A673 (cell line): ENCODE measurements at regions of chr5 and their contacts with region 1.

Region 1: DNA sequence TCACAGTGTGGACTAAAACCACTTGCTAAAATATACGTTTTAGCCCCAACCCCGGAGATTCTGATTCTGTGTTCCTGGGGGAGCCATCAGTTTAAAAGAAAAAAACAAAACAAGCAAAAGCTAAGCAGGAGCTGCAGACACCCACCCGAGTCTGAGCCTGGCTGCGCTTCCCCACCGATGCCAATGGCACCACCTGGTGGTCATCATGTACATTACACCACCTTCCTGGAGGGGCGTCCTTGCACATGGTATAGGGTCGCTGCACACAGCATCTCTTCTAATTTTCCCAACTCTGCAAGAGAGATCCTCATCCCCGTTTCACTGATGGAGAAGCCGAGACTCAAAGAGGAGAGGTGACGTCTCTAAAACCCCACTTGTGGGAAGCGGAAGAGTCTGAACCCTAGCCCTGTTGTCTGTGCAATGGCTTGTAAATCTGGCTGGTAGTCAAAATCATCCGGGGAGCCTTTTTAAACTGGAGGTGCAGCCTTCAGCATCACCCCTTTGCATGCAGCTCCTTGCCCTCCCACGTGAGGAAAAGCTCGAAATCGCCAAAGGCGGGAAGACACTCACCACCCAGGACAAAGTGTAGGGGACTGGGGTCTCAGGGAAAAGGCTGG is 23.1 kb upstream of the CNOT6 start:
- DNase-seq: peak; percentile 65
- H3K4me3 ChIP-seq: no peak overlapping the region
- H3K27ac ChIP-seq: no peak overlapping the region
- H3K4me1 ChIP-seq: no peaks in the 10 kb centered on the region
- H3K27me3 ChIP-seq: no peaks in the 10 kb centered on the region
- CTCF ChIP-seq: peak; percentile 83

Region 2: DNA sequence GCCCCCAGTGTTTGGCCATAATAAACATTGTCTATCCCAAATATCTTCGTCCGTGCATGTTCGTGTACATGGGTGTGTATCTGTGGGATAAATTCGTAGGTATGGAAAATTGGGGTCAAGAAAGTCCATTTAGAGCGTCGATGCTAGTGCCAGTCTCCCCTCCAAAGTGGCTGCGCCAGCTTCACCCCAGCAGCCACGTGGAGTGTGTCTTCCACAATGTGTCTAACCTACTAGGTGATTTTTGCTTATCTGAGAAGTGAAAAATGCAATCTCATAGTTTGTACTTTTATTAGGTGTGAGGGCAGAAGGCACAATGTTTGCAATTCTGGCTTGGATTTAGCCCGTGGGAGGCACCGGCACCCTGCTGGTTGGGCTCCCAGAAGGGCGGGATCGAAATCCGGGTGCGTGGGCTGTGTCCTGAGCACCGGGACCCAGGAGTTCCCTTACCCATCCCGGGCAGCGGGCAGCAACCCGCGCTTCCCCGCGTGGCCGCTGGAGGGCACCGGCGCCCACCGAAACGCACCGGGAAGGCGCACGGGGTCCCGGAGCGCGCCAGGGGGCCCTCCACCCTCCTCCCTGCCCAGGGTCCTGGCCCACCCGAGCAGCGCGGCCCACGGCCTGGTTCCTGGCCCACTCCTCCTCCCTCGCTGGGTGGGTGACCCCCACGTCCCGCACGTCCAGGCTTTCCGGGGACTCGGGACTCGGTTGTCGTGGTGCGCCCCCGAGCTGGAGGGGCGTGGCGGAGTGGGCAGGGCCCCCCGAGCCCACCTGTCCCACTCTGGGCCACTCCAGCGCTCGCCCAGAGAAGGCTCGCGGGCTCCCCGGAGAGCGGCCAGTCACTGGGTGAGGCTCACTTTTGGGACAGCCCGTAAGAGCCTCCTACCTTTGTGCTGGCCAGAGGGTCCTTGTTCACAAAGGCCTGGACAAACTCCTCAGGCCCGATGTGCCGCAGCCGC is 344.1 kb before region 1 on chr5:
- CTCF ChIA-PET with region 1: interaction called, 3 read pairs
- POLR2A ChIA-PET with region 1: no interaction called
- intact Hi-C with region 1: loop called (anchors 1 kb)
- DNase-seq: peak; percentile 10
- H3K4me3 ChIP-seq: peak overlapping the region; percentile 40
- H3K27ac ChIP-seq: no peak overlapping the region
- H3K4me1 ChIP-seq: peaks cover 8% of the 10 kb centered on the region
- H3K27me3 ChIP-seq: peaks cover 21% of the 10 kb centered on the region
- CTCF ChIP-seq: peak; percentile 78

Region 3: GRCh38 chr5:180201051-180201987 is 269.8 kb before region 1 on chr5:
- CTCF ChIA-PET with region 1: no interaction called
- POLR2A ChIA-PET with region 1: no interaction called
- intact Hi-C with region 1: loop called (anchors 5 kb)
- DNase-seq: peak; percentile 42
- H3K4me3 ChIP-seq: no peak overlapping the region
- H3K27ac ChIP-seq: no peak overlapping the region
- H3K4me1 ChIP-seq: no peaks in the 10 kb centered on the region
- H3K27me3 ChIP-seq: no peaks in the 10 kb centered on the region
- CTCF ChIP-seq: peak; percentile 64

Region 4: DNA sequence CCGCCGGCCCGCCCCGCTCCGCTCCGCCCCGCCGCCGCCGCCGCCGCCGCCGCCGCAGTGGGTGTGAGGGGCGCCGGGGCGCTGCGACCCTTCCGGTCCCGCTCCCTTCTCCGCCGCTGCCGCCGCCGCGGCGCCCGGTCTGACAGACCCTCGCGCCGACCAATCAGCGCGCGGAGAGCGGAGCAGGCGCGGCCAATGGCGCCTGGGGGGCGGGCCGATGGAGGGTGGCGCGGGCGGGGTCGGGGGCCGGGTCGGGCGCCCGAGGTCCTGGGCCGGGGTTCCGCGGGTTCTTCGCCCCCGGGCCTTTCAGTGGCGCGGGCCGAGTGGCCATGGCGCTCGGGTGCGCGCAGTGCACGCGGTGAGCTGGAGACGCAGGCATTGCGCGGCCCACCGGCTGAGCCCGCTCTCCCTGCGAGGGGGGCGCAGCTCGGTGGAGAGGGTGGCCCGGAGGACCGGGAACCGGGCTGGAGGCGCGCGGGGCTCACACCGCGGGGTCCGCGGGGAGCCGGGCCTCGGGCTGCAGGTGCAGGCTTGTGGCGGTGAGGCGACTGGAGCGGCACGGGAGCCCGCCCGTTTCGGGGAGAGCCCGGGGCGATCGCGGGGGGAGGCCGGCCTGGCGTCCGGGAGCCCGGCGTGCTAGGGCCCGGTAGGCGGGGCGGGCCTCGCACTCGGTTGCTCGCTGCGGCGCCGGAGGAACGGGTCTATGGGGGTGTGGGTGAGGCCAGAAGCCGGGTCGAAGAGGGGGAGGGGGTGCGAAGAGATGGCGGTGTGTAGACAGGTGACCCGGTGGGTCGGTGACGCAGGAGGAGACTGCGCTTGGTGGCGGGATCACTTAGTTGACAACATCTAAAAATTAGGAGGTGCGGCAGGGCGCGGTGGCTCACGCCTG is 178.9 kb before region 1 on chr5 and contains the start of gene MAPK9:
- CTCF ChIA-PET with region 1: interaction called, 3 read pairs
- POLR2A ChIA-PET with region 1: no interaction called
- intact Hi-C with region 1: loop called (anchors 1 kb)
- DNase-seq: peak; percentile 84
- H3K4me3 ChIP-seq: peak within 1 kb of the TSS; percentile 93
- H3K27ac ChIP-seq: peak within 1 kb of the TSS; percentile 82
- H3K4me1 ChIP-seq: peaks cover 5% of the 10 kb centered on the region
- H3K27me3 ChIP-seq: no peaks in the 10 kb centered on the region
- CTCF ChIP-seq: no peak
- total RNA-seq, gene MAPK9: 31.3 and 34.4 TPM in 2 replicates

Region 5: DNA sequence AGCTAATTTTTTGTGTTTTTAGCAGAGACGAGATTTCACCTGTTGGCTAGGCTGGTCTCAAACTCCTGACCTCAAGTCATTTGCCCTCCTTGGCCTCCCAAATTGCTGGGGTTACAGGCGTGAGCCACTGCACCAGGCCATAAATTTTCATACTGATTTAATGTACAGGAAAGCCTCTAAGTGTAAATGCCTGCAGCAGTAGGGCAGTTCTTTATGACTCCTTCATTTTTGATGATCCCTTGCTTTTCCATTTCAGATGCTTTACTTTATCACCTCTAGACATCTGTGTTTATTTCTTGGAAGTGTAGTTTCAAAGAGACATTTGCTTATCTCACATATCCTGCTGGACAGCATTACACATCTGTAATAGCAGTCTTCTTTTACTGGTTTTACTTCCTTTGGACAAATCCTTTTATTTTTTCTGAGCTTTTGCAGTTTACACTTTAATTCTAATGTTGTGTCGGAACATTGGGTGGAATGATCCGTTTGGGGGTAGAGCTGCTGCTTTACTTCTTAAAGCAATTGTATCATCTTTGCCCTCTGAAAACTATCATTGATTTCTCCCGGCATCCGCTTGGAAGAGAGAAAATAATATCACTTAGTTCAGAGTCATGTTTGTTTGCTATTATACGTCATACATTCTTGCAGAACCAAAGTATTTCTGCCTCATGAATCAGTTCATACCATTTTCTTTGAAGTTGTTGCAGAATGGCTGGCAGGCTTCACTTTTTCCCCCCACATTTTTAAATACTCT is 84.3 kb after region 1 on chr5:
- CTCF ChIA-PET with region 1: no interaction called
- POLR2A ChIA-PET with region 1: no interaction called
- intact Hi-C with region 1: no loop called
- DNase-seq: no peak
- H3K4me3 ChIP-seq: no peak overlapping the region
- H3K27ac ChIP-seq: no peak overlapping the region
- H3K4me1 ChIP-seq: no peaks in the 10 kb centered on the region
- H3K27me3 ChIP-seq: no peaks in the 10 kb centered on the region
- CTCF ChIP-seq: no peak

Region 6: DNA sequence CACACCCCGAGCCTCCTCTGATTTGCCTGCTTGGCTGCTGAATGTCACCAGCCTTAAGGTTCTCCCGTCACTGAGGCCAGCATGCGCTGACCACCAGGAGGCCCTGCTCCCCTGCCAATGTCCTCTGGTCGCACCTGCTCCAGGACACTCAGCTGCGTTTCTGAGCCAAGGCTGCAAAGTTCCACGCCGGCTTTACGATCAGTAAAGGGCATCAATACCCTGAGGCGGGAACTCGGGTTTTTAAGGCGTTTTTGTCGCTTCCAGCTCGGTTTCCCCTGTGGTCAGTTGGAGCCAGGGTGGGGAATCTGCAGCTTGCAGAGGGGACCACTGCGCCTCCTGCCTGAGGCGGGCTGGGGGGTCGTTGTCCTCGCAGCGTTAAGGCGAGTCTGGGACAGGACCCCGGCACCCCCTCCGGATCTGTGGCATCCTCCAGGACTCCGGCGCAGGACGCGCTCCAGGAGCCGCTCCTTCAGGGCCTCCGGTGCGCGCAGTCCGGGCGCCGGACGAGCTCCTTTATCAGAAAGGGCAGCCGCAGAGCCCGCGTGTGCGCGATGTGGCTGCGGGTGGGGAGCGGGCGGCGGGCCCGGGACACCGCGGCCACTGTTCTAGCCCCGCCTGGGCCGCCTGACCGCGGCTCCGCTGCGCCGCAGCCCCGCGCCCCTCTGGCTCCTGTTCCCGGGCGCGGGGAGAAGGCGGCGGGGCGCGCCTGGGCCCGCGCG is 202.5 kb after region 1 on chr5:
- CTCF ChIA-PET with region 1: no interaction called
- POLR2A ChIA-PET with region 1: no interaction called
- intact Hi-C with region 1: no loop called
- DNase-seq: no peak
- H3K4me3 ChIP-seq: peak overlapping the region; percentile 19
- H3K27ac ChIP-seq: no peak overlapping the region
- H3K4me1 ChIP-seq: no peaks in the 10 kb centered on the region
- H3K27me3 ChIP-seq: peaks cover 15% of the 10 kb centered on the region
- CTCF ChIP-seq: no peak